ENCODE measurements at regions of chr6 and their contacts with region 1.

Region 1: GRCh38 chr6:12233693-12234571 is 56.2 kb upstream of the EDN1 start:
- DNase-seq: peak; percentile 63
- ATAC-seq: peak; percentile 87
- H3K4me3 ChIP-seq: no peak overlapping the region
- H3K27ac ChIP-seq: no peak overlapping the region
- H3K4me1 ChIP-seq: no peaks in the 10 kb centered on the region
- H3K27me3 ChIP-seq: no peaks in the 10 kb centered on the region
- CTCF ChIP-seq: peak; percentile 74 to 99 (median 77)
- POLR2A ChIP-seq: no peak
- RAD21 ChIP-seq: peak; percentile 87

Region 2: DNA sequence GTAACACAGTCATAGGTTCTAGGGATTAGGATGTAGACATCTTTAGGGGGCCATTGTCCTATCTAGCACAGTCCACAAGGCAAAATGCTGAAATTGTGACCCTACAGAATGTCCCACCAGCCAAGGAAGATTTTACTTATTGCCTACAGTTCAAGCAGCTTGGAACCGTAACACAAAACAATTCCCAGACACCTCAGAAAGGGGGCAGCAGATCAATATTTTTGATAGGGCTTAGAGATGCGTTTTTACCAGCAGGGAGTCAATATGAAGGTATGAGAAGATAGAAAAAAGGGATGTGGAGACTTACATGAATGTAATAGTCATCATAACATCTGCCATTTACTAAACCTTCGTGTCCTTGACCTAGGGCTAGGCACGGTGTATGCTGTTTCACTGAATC is 615.4 kb before region 1 on chr6:
- CTCF ChIA-PET with region 1: interaction called, 15 read pairs
- POLR2A ChIA-PET with region 1: no interaction called
- RAD21 ChIA-PET with region 1: no interaction called
- intact Hi-C with region 1: no loop called
- DNase-seq: peak; percentile 22
- ATAC-seq: peak; percentile 88
- H3K4me3 ChIP-seq: no peak overlapping the region
- H3K27ac ChIP-seq: no peak overlapping the region
- H3K4me1 ChIP-seq: peaks cover 8 to 12% of the 10 kb centered on the region in 2 experiments
- H3K27me3 ChIP-seq: no peaks in the 10 kb centered on the region
- CTCF ChIP-seq: peak; percentile 46 to 58 (median 48); a peak in 5 of 6 replicates
- POLR2A ChIP-seq: no peak
- RAD21 ChIP-seq: peak; percentile 68

Region 3: GRCh38 chr6:11700118-11700718 is 533.7 kb before region 1 on chr6:
- CTCF ChIA-PET with region 1: no interaction called
- POLR2A ChIA-PET with region 1: no interaction called
- RAD21 ChIA-PET with region 1: no interaction called
- intact Hi-C with region 1: loop called (anchors 1 kb)
- DNase-seq: peak; percentile 32
- ATAC-seq: no peak; the same call in 1 of the 2 replicates
- H3K4me3 ChIP-seq: no peak overlapping the region
- H3K27ac ChIP-seq: no peak overlapping the region
- H3K4me1 ChIP-seq: peaks cover 0 to 10% of the 10 kb centered on the region in 2 experiments; a peak in 1 of 4 replicates
- H3K27me3 ChIP-seq: no peaks in the 10 kb centered on the region
- CTCF ChIP-seq: peak; percentile 26 to 46 (median 30); a peak in 3 of 6 replicates
- POLR2A ChIP-seq: no peak
- RAD21 ChIP-seq: peak; percentile 60

Region 4: GRCh38 chr6:12150812-12151432 is 83.0 kb before region 1 on chr6:
- CTCF ChIA-PET with region 1: interaction called, 3 read pairs
- POLR2A ChIA-PET with region 1: no interaction called
- RAD21 ChIA-PET with region 1: no interaction called
- intact Hi-C with region 1: loop called (anchors 2 kb)
- DNase-seq: peak; percentile 19
- ATAC-seq: peak; percentile 84
- H3K4me3 ChIP-seq: no peak overlapping the region
- H3K27ac ChIP-seq: no peak overlapping the region
- H3K4me1 ChIP-seq: peaks cover 0 to 10% of the 10 kb centered on the region in 2 experiments; a peak in 2 of 4 replicates
- H3K27me3 ChIP-seq: no peaks in the 10 kb centered on the region
- CTCF ChIP-seq: peak; percentile 66 to 89 (median 83)
- POLR2A ChIP-seq: no peak
- RAD21 ChIP-seq: peak; percentile 79

Measured in HCT116 (cell line).